ENCODE measurements at regions of chr18 and their contacts with region 1.

Region 1: GRCh38 chr18:62814132-62814759 is 98.9 kb downstream of the PHLPP1 start:
- DNase-seq: no peak
- H3K4me3 ChIP-seq: no peak overlapping the region
- CTCF ChIP-seq: no peak
- POLR2A ChIP-seq: no peak

Region 2: GRCh38 chr18:62714671-62715435 is 99.4 kb before region 1 on chr18:
- intact Hi-C with region 1: loop called (anchors 10 kb)
- DNase-seq: peak; percentile 99 to 100
- H3K4me3 ChIP-seq: no peak overlapping the region
- CTCF ChIP-seq: no peak
- POLR2A ChIP-seq: no peak

Region 3: GRCh38 chr18:62751341-62751821 is 62.9 kb before region 1 on chr18:
- intact Hi-C with region 1: no loop called
- DNase-seq: no peak
- H3K4me3 ChIP-seq: no peak overlapping the region
- CTCF ChIP-seq: no peak
- POLR2A ChIP-seq: no peak